ENCODE measurements at regions of chr17 and their contacts with region 1.

Region 1: DNA sequence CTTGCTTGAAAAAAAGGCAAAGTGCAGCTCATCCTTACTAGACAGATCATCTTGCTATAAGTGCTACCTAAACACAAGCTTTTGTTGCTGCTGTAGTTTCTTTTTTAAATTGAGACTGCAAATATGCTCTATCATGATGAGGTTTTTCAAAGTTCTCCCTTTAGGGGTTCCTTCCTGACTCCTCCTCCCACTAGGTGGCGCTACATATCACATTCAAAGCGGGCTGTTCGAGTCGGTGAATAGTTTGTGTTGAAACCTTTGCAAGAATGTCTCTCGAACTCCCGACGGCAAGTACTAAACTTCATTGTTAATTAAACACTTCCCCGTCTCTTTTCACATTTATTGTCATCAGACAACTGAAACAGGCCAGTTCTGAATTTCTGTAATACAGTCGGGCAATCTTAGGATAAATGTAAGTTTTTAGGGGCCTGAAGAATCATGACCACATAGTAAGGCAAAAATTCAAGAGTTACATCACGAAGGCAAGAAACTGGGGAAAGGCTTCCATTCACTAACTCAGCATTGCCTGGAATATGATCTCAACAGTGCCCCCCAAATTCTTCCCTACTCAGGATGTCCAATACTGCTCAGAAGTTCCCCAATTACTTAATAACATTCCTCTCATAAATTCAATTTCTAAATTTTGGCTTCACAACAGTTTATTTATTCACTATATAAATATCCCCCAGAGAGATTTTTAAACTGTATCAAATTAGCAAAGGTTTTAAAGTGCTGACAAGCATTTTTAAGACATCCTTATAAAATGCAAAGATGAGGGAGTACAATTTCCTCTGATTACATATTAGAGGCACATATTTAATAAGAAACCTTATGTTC is 6.7 kb downstream of the HS3ST3A1 start:
- DNase-seq: peak; percentile 20
- ATAC-seq: no peak
- H3K4me3 Mint-ChIP-seq: no peak overlapping the region
- H3K27ac Mint-ChIP-seq: no peak overlapping the region
- H3K4me1 Mint-ChIP-seq: peaks cover 2% of the 10 kb centered on the region
- H3K27me3 Mint-ChIP-seq: peaks cover 32% of the 10 kb centered on the region
- CTCF ChIP-seq: peak; percentile 91

Region 2: DNA sequence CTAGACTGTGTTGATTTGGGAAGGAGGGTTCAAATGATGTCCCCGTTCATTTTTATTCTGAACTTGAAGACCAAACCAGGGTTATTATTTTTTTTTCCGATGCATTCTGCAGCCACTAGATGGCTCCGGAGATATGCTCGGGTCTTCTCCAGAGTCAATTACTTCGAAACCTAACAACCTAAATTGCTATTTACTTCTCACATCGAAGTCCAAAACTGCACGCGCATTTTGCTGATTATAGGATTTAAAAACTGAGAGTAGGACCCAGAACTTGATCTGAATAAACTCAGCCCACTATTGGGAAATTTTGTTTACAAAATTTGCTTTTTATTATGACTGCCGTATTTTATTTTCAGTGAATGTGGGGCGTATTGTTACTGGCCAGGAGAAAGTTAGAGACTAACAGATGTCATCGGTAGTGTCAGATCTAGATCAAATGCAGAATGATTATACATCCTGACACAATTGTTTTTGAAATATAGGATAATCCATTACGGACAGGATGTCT is 257.1 kb before region 1 on chr17:
- CTCF ChIA-PET with region 1: no interaction called
- POLR2A ChIA-PET with region 1: no interaction called
- intact Hi-C with region 1: loop called (anchors 5 kb)
- DNase-seq: no peak
- ATAC-seq: no peak
- H3K4me3 Mint-ChIP-seq: no peak overlapping the region
- H3K27ac Mint-ChIP-seq: no peak overlapping the region
- H3K4me1 Mint-ChIP-seq: no peaks in the 10 kb centered on the region
- H3K27me3 Mint-ChIP-seq: no peaks in the 10 kb centered on the region
- CTCF ChIP-seq: no peak

Region 3: GRCh38 chr17:14118951-14119350 is 524.0 kb after region 1 on chr17:
- CTCF ChIA-PET with region 1: no interaction called
- POLR2A ChIA-PET with region 1: no interaction called
- intact Hi-C with region 1: loop called (anchors 10 kb)
- DNase-seq: no peak
- ATAC-seq: no peak
- H3K4me3 Mint-ChIP-seq: no peak overlapping the region
- H3K27ac Mint-ChIP-seq: no peak overlapping the region
- H3K4me1 Mint-ChIP-seq: peaks cover 13% of the 10 kb centered on the region
- H3K27me3 Mint-ChIP-seq: no peaks in the 10 kb centered on the region
- CTCF ChIP-seq: no peak

Region 4: DNA sequence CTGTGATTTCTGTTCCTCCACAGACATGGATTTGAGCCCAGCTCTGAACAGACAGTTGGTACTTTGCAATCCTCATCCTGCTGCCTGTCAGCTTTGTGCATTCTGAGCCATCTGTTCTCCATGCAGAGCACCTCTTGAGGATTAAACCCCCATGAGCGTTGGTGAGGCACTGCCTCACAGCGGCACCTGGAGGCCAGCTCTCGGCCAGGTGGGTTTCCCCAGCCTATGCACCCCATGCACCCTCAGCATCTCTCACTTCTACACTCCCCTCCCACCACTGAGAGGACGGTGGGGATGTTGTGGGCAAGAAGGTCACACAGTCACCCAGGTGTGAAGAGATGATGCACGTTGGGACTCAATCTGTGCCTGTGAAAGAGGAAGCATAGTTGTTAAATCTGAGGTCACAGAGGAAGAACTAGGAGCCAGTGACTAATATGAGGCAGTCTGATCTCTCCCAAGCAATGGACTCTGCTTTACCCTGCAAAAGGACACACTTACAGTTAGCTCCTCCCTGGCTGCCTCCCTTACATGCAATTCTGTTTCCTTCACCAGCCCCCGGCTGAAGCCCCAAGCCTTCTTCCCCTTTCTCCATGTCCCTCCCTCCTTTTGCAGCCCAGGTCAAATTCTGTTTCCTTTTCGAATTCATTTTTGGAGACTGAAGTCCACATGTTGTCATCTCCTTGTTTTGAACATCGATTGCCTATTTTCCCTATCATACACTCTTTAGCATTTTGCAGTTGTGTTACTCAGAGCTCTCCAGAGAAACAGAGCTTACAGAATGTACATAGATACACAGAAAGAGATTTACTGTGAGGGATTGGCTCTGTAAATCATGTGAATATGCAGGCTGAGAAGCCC is 764.4 kb after region 1 on chr17:
- CTCF ChIA-PET with region 1: no interaction called
- POLR2A ChIA-PET with region 1: no interaction called
- intact Hi-C with region 1: loop called (anchors 2 kb)
- DNase-seq: peak; percentile 61
- ATAC-seq: peak; percentile 98
- H3K4me3 Mint-ChIP-seq: peak overlapping the region; percentile 26
- H3K27ac Mint-ChIP-seq: peak overlapping the region; percentile 8
- H3K4me1 Mint-ChIP-seq: peaks cover 26% of the 10 kb centered on the region
- H3K27me3 Mint-ChIP-seq: no peaks in the 10 kb centered on the region
- CTCF ChIP-seq: no peak

Region 5: DNA sequence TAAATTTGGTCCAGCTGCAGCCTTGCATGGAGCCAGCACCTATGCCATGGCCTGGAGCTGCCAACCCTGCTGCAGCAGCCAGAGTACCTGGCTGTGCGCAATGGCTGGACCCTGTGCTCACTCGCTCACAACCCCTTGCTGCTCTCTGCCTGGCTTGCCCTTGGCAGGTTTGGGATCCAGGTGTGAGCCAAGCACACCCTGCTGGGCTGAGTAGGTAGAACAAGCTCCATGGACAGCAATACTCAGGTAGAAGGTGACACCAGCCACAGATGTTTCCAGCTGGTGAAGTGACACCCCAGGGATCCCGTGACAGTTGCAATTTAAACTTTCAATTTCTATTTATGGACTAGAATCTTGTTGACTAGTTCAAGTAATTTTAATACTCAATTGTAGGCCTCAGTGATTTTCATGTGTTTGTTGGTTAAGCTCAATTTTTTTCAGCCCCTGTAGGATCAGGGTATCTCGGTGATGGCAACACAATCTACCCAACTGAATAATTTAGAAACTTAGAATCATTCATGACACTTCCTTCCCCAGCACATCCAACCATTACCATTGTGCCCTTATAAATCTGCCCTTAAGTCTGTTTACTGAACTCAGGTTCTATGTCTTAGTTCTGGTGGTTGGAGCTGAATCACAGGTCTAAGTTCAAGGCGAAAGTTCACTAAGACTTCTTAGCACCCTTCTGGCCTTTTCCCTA is 1190.2 kb after region 1 on chr17:
- CTCF ChIA-PET with region 1: interaction called, 4 read pairs
- POLR2A ChIA-PET with region 1: no interaction called
- intact Hi-C with region 1: loop called (anchors 1 kb)
- DNase-seq: no peak
- ATAC-seq: peak; percentile 50
- H3K4me3 Mint-ChIP-seq: no peak overlapping the region
- H3K27ac Mint-ChIP-seq: no peak overlapping the region
- H3K4me1 Mint-ChIP-seq: peaks cover 4% of the 10 kb centered on the region
- H3K27me3 Mint-ChIP-seq: peaks cover 15% of the 10 kb centered on the region
- CTCF ChIP-seq: no peak

Region 6: GRCh38 chr17:14926526-14927122 is 1331.6 kb after region 1 on chr17:
- CTCF ChIA-PET with region 1: interaction called, 72 read pairs
- POLR2A ChIA-PET with region 1: no interaction called
- intact Hi-C with region 1: loop called (anchors 1 kb)
- DNase-seq: no peak
- ATAC-seq: no peak
- H3K4me3 Mint-ChIP-seq: no peak overlapping the region
- H3K27ac Mint-ChIP-seq: no peak overlapping the region
- H3K4me1 Mint-ChIP-seq: no peaks in the 10 kb centered on the region
- H3K27me3 Mint-ChIP-seq: peaks cover 11% of the 10 kb centered on the region
- CTCF ChIP-seq: peak; percentile 76